Gastrocnemius medialis (tissue), 4 donors: ENCODE measurements at regions of chr2 and their contacts with region 1.

Region 1: DNA sequence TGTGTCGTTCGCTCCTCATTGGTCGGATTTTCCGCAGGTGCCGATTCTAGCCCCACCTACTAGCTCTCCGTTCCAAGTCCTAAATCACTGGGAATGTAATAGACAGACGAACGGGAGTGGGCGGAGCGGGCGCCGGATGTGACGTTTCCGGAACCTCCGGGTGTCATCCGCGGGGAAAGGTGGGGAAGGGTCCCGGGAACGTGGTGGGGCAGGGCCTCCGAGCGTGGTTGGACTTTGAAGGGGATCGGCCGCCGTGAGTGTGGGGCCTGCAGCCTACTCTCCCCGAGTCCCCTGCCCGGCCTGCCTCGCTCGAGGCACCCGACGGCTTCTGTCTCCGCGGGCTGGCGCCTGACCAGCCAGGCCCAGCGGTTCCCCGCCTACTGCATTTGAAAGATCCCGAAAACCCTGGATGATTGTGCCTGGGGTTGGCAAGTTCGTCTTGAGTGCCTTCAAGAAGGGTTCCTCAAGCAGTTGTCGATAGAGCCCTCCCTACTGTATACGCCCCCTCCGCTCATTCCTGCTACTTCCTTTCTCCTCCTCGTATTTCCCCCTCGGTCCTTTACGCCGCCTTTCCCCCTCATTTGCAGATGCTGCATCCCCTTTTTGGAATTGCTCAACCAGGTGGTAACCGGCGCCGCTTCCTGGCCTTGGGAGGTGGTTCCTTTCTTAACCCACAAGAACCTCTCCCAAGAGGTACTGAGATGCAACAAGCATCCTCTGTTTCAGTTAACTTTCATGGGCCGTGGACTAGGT is at the start of gene STAMBP:
- DNase-seq: peak; percentile 96
- ATAC-seq: peak; percentile 91 to 96
- H3K4me3 ChIP-seq: peak within 1 kb of the TSS; percentile 79 to 94 (median 86)
- H3K27ac ChIP-seq: peak within 1 kb of the TSS; percentile 92 to 97 (median 96)
- H3K4me1 ChIP-seq: peaks cover 47 to 51% of the 10 kb centered on the region in 2 donors
- H3K27me3 ChIP-seq: no peaks in the 10 kb centered on the region
- CTCF ChIP-seq: no peak
- POLR2A ChIP-seq: peak; percentile 78 to 85
- total RNA-seq, gene STAMBP: 38.0 to 85.4 (median 67.1) TPM

Region 2: GRCh38 chr2:73716543-73717250 is 112.3 kb before region 1 on chr2:
- in situ Hi-C with region 1: no loop called
- intact Hi-C with region 1: no loop called
- DNase-seq: no peak
- ATAC-seq: no peak
- H3K4me3 ChIP-seq: no peak overlapping the region
- H3K27ac ChIP-seq: no peak overlapping the region
- H3K4me1 ChIP-seq: no peaks in the 10 kb centered on the region
- H3K27me3 ChIP-seq: peaks cover 0 to 3% (median 0%) of the 10 kb centered on the region in 3 donors
- CTCF ChIP-seq: no peak
- POLR2A ChIP-seq: no peak

Region 3: GRCh38 chr2:73985308-73986084 is 156.5 kb after region 1 on chr2:
- in situ Hi-C with region 1: no loop called
- intact Hi-C with region 1: loop called (anchors 10 kb)
- DNase-seq: no peak
- ATAC-seq: peak; percentile 7 to 12
- H3K4me3 ChIP-seq: peak overlapping the region; percentile 58 to 71 (median 62)
- H3K27ac ChIP-seq: peak overlapping the region in 3 of 4 donors; percentile 25 to 62 (median 53)
- H3K4me1 ChIP-seq: peaks cover 41 to 51% of the 10 kb centered on the region in 2 donors
- H3K27me3 ChIP-seq: no peaks in the 10 kb centered on the region
- CTCF ChIP-seq: no peak
- POLR2A ChIP-seq: peak in 1 of 2 donors; percentile 23

Region 4: GRCh38 chr2:74147727-74148456 is 318.9 kb after region 1 on chr2 and contains the start of gene BOLA3:
- in situ Hi-C with region 1: loop called in 1 of 4 experiments (anchors 25 kb)
- intact Hi-C with region 1: loop called (anchors 10 kb)
- DNase-seq: peak; percentile 68 to 74
- ATAC-seq: peak; percentile 86 to 92
- H3K4me3 ChIP-seq: peak within 1 kb of the TSS; percentile 68 to 84 (median 78)
- H3K27ac ChIP-seq: peak within 1 kb of the TSS; percentile 51 to 78 (median 62)
- H3K4me1 ChIP-seq: peaks cover 7 to 9% of the 10 kb centered on the region in 2 donors
- H3K27me3 ChIP-seq: no peaks in the 10 kb centered on the region
- CTCF ChIP-seq: peak in 4 of 5 experiments; percentile 47 to 80 (median 64)
- POLR2A ChIP-seq: no peak
- total RNA-seq, gene BOLA3: 32.2 to 114 (median 69.5) TPM

Region 5: DNA sequence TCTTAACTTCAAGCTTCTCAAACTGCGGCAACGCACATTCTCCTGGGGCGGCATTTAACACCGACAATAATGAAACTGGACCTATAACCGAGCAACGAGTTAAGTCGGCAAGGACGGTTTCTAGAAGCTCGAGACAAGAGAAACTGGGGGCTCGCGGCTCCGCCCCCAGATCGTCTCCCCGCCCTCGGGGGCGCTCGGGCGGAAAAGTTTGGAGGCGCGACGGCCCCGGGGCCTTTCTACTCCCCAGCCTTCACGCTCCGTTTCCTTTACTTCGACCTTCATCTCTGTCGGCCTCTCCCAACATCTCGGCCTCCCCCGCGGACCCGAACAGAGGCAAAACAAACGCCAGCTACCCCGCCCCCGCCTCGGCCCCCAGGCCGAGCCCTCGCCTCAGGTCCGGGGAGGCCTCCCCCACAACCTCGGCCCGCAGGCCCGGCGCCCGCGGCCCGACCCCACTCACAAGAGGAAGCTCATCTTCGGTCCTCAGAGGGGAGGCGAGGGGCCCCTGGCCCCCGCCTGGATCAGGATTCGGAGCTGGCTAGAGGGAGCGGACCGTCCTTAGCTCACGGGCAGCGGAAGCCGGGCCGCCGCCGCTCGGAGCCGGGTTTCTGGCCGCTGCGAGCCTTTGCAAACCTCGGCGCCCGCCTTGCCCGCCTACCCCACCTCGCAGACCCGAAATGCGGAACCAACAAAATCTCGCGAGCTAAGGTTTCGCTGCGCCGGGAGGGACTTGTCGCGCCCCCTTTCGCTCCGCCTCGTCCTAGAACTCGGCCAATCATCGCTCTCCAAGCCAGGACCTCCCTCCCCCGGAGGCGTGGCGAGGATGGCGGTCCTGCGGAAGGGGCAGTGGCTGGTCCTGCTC is 349.4 kb after region 1 on chr2 and contains the start of gene MOB1A:
- in situ Hi-C with region 1: loop called in 1 of 4 experiments (anchors 25 kb)
- intact Hi-C with region 1: loop called (anchors 10 kb)
- DNase-seq: peak; percentile 96 to 97
- ATAC-seq: peak; percentile 99
- H3K4me3 ChIP-seq: peak within 1 kb of the TSS; percentile 67 to 92 (median 80)
- H3K27ac ChIP-seq: peak within 1 kb of the TSS; percentile 84 to 93 (median 87)
- H3K4me1 ChIP-seq: peaks cover 26 to 31% of the 10 kb centered on the region in 2 donors
- H3K27me3 ChIP-seq: no peaks in the 10 kb centered on the region
- CTCF ChIP-seq: no peak
- POLR2A ChIP-seq: peak; percentile 89 to 94
- total RNA-seq, gene MOB1A: 19.9 to 44.3 (median 35.5) TPM

Region 6: DNA sequence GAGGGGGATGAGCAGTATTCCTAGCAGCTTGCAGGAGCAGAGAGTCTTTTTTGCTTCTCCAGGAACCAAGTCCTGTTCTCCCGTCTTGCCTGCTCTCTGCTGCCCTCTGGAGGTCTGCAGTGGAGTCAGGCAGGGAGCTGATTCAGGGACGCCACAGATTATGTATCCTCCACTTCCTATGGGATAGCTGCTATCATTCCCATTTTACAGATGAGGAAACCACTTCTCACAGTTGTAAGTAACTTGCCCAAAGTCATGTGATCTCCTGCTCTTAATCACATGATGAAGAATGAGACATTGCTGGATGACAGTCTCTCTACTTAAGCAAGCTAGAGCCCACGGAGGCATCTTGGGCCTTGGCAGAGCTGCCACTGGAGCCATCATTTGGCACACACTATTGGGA is 505.9 kb after region 1 on chr2:
- in situ Hi-C with region 1: loop called in 3 of 4 experiments (anchors 10 to 25 kb)
- intact Hi-C with region 1: loop called (anchors 10 kb)
- DNase-seq: peak; percentile 37 to 56
- ATAC-seq: peak; percentile 83 to 85
- H3K4me3 ChIP-seq: no peak overlapping the region
- H3K27ac ChIP-seq: no peak overlapping the region
- H3K4me1 ChIP-seq: no peaks in the 10 kb centered on the region
- H3K27me3 ChIP-seq: no peaks in the 10 kb centered on the region
- CTCF ChIP-seq: peak; percentile 70 to 93 (median 79)
- POLR2A ChIP-seq: no peak